PC-9 (cell line): ENCODE measurements at regions of chr6 and their contacts with region 1.

Region 1: GRCh38 chr6:14270925-14271791 is 153.6 kb downstream of the CD83 start:
- DNase-seq: peak; percentile 98
- H3K4me3 ChIP-seq: no peak overlapping the region
- H3K27ac ChIP-seq: peak overlapping the region; percentile 92
- H3K4me1 ChIP-seq: peaks cover 20% of the 10 kb centered on the region
- H3K27me3 ChIP-seq: no peaks in the 10 kb centered on the region
- CTCF ChIP-seq: no peak; the same call in 1 of the 2 replicates

Region 2: DNA sequence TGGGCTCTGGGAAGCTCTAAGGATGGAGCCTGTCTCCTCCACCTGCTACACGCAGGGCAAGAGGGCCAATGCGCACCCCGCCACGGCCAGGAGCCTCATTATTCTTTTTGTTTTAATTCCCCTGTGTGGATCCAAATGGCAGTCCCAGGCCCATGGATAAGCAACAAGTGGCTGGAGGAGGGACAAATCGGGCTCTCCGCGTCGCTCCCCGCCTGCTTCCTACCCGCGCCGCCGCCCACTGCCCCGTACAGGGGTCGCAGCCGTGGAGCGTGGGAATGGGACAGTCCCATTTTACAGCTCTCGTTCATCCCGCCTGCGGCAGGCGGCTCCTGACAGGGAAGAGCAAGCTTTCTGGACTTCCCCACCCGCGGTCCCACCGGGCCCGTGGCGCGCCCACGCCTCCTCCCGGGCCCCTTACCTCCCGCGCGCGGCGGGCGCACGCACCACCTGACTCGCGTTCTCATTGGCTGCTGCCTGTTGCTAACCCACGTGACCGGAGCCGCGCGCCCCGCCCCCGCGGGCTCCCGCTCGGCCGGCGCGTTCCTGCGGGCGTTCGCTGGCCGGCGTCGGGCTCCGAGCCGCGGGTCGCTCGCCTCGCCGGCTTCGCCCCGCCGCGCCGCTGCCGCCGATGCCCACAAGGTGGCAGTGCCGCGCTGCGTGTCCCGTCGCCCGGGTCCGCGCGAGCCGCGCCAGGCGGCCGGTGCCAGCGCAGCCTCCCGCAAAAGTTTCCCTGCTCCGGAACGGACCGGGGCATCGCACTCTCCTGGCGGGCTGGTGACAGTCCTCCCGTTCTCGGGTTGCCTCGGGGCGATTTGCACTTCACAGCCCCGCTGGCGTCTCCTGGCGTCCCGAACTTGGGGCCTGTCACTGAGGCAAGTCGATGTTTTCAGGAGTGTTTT is 60.2 kb before region 1 on chr6:
- CTCF ChIA-PET with region 1: interaction called, 4 read pairs
- POLR2A ChIA-PET with region 1: interaction called, 4 read pairs
- intact Hi-C with region 1: loop called (anchors 1 kb)
- DNase-seq: peak; percentile 67 to 97
- H3K4me3 ChIP-seq: peak overlapping the region; percentile 96
- H3K27ac ChIP-seq: peak overlapping the region; percentile 51
- H3K4me1 ChIP-seq: peaks cover 14% of the 10 kb centered on the region
- H3K27me3 ChIP-seq: no peaks in the 10 kb centered on the region
- CTCF ChIP-seq: no peak

Region 3: GRCh38 chr6:14386668-14387067 is 115.5 kb after region 1 on chr6:
- CTCF ChIA-PET with region 1: no interaction called
- POLR2A ChIA-PET with region 1: no interaction called
- intact Hi-C with region 1: loop called (anchors 1 kb)
- DNase-seq: no peak
- H3K4me3 ChIP-seq: no peak overlapping the region
- H3K27ac ChIP-seq: no peak overlapping the region
- H3K4me1 ChIP-seq: peaks cover 5% of the 10 kb centered on the region; the same call in 1 of the 2 replicates
- H3K27me3 ChIP-seq: no peaks in the 10 kb centered on the region
- CTCF ChIP-seq: no peak

Region 4: DNA sequence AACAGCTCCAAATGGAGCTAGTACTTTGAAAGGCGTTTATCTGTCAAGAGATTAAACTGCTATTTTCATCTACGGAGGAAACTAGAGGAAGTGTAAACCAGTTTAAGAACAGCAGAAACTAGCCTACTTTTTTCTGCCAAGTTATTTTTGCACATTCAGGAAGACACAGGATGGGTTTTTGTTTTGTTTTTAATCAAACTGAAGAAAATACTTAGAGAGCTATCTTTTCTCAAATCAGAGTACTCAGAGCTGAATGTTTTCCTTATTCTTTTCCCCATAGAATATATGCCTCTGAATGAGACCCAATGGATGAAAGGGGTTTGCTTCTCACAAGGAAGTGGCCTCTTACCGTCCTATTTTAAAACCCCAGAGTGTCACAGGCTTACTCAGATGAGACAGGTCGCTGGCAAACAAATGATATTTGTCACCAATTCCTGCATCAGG is 384.9 kb after region 1 on chr6:
- CTCF ChIA-PET with region 1: no interaction called
- POLR2A ChIA-PET with region 1: no interaction called
- intact Hi-C with region 1: no loop called
- DNase-seq: no peak
- H3K4me3 ChIP-seq: no peak overlapping the region
- H3K27ac ChIP-seq: no peak overlapping the region
- H3K4me1 ChIP-seq: peaks cover 34% of the 10 kb centered on the region
- H3K27me3 ChIP-seq: no peaks in the 10 kb centered on the region
- CTCF ChIP-seq: no peak

Region 5: DNA sequence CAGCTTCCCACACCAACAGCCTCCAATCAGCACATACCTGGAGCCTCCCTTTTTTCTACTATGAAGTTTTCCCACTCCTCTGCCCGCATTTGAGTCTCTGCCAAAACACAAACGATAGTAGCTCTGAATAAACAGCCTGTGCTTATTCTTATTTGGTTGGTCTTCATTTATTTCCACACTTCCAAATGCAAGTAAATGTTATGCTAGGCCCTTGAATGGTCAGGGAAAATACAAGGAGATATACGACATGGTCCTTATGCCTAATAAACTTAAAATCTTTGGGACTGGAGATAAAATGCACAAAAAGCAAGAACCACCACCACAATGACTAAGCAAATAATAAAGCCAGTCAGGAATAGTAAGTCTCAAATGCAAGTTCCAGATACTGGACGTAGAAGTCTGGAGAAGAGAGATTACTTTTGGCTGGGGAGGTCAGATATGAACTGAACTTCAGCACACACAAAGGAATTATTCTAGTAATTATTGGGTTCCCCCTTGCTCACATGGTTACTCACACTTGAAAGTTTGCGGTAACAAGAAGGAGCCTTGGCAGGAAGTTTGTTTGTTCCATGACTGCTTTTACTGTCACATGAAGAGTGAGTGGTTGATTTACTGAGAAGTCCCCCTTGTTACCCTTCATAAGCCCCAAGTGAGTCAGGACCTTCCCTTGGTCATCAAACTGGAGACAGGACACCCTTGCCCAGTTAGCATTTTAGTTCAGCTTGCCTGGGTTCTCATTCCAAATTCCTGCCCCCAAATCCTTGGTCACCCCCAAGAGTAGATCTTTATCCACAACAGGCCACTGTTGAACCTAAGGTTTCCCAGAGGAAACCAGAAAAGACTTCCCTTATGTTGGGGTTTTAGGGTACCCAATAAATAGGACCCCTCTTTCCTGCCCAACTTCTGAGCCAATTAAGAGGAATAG is 463.5 kb after region 1 on chr6:
- CTCF ChIA-PET with region 1: no interaction called
- POLR2A ChIA-PET with region 1: interaction called, 3 read pairs
- intact Hi-C with region 1: loop called (anchors 2 kb)
- DNase-seq: peak in 1 of 2 experiments; percentile 37
- H3K4me3 ChIP-seq: no peak overlapping the region; the same call in 1 of the 2 replicates
- H3K27ac ChIP-seq: peak overlapping the region; percentile 99
- H3K4me1 ChIP-seq: peaks cover 53% of the 10 kb centered on the region
- H3K27me3 ChIP-seq: no peaks in the 10 kb centered on the region
- CTCF ChIP-seq: no peak

Region 6: DNA sequence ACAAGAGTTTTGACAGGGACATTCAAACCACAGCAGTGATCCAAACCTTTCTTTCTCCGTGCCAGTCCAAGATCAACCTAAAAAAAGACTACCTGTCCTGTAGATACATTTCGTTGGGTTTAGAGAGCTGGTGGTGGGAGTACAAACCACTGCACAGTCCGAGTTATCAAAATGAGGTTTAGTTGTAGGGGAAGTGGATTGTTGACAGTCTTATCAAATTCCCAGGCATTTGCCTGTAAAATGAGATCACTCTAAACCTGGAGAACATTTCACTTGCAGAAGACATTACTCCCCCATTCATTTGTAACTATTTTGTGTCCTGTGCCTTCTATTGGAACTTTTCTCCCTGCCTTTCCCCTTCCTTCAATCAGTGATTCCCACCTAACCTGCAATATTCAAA is 505.1 kb after region 1 on chr6:
- CTCF ChIA-PET with region 1: no interaction called
- POLR2A ChIA-PET with region 1: interaction called, 3 read pairs
- intact Hi-C with region 1: loop called (anchors 2 kb)
- DNase-seq: peak in 1 of 2 experiments; percentile 9
- H3K4me3 ChIP-seq: no peak overlapping the region
- H3K27ac ChIP-seq: no peak overlapping the region
- H3K4me1 ChIP-seq: 0 out of 2 replicates have a peak, but pooled peaks cover 3% of the 10 kb centered on the region
- H3K27me3 ChIP-seq: no peaks in the 10 kb centered on the region
- CTCF ChIP-seq: no peak

Region 7: DNA sequence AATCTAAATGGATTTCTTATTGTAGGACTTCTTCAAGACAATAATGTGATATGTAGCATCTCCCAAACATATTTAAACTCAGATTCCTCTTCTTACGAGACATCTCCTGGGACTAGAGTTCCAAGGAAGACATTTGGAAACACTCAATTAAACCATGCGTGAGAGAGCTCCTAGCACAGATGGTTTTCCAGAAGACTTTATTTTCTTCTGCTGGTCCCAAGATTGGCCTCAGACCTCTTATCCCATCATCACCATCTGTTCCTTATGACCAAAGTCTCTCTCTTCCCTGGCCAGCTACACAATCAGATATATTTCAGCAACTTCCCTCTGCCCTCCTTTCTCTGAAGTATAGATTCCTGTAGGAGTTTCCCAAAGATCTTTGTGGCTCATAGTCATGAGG is 881.5 kb after region 1 on chr6:
- CTCF ChIA-PET with region 1: no interaction called
- POLR2A ChIA-PET with region 1: no interaction called
- intact Hi-C with region 1: no loop called
- DNase-seq: no peak
- H3K4me3 ChIP-seq: no peak overlapping the region
- H3K27ac ChIP-seq: no peak overlapping the region
- H3K4me1 ChIP-seq: peaks cover 15% of the 10 kb centered on the region
- H3K27me3 ChIP-seq: no peaks in the 10 kb centered on the region
- CTCF ChIP-seq: no peak

Region 8: DNA sequence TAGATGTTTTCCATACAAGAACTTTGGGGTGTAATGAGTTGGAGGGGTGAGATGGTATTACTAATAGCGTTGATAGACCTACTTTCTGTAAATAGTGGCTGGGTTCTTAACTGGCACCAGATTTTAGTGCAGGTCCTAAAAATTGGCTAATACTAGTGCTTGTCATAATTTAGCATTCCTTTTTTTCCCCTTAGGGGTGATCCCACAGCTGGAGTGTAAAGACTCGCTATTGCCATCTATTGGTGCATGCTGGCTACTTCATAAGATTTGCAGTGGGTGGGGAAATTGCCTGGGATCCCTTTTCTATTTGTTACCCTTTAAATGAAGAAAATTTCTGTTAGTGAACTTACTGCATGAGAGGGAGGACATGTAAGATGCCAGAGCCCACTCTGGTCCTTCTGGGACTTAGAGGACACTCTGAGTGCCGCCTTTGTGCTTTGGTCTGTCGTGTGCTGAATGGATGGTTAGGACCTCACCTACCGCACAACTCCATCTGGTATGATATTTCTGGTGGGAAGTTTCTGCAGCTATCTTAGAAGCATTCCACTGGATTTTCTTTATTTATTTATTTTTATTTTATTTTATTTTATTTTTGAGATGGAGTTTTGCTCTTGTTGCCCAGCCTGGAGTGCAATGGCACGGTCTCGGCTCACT is 1170.2 kb after region 1 on chr6:
- CTCF ChIA-PET with region 1: interaction called, 4 read pairs
- POLR2A ChIA-PET with region 1: no interaction called
- intact Hi-C with region 1: loop called (anchors 5 kb)
- DNase-seq: peak; percentile 58 to 69
- H3K4me3 ChIP-seq: no peak overlapping the region
- H3K27ac ChIP-seq: no peak overlapping the region
- H3K4me1 ChIP-seq: peaks cover 46% of the 10 kb centered on the region
- H3K27me3 ChIP-seq: no peaks in the 10 kb centered on the region
- CTCF ChIP-seq: peak; percentile 81